ENCODE measurements at regions of chr19 and their contacts with region 1.

Region 1: GRCh38 chr19:662962-663681 is at the start of gene RNF126:
- DNase-seq: peak; percentile 88
- ATAC-seq: peak; percentile 89
- H3K4me3 ChIP-seq: peak within 1 kb of the TSS; percentile 87
- H3K27ac ChIP-seq: peak within 1 kb of the TSS; percentile 93
- H3K4me1 ChIP-seq: peaks cover 14% of the 10 kb centered on the region
- H3K27me3 ChIP-seq: no peaks in the 10 kb centered on the region
- CTCF ChIP-seq: no peak
- POLR2A ChIP-seq: peak; percentile 71; the same call in 1 of the 2 replicates
- RAD21 ChIP-seq: no peak
- total RNA-seq, gene RNF126: 7.0 and 8.6 TPM in 2 replicates

Region 2: DNA sequence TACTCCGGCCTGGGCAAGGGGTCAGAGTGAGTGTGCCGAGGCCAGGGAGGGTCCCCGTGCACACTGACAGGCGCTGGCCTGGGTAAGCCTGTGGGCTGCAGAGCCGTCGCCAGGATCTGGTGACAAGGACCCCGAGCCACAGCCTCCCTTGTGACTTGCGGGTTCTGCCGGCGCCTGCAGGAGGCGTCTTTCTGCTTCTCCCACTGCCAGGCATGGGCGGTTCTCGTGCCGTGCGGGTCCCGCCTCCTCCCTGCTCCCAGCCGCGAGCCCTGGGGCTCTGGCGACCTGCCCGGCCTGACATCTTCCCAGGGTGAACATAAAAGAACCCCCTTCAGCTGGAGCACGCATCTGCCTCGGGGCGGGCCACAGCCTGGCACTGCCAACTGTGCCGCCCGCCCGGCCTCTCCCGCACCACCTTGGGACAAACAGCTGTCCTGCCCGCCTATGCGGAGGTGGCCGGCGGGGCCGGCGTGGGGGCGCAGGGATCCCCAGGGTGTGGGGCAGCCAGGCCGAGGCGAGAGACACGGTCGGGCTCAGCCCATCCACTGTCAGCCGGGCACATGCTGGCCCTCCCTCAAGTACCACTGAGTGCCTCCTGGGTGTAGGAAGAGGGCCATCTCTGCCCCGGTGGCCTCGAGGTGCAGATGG is 74.9 kb before region 1 on chr19:
- CTCF ChIA-PET with region 1: no interaction called
- POLR2A ChIA-PET with region 1: no interaction called
- dilution Hi-C with region 1: no loop called
- in situ Hi-C with region 1: no loop called
- intact Hi-C with region 1: loop called (anchors 2 kb)
- DNase-seq: peak; percentile 72
- ATAC-seq: peak; percentile 61
- H3K4me3 ChIP-seq: no peak overlapping the region
- H3K27ac ChIP-seq: no peak overlapping the region
- H3K4me1 ChIP-seq: peaks cover 5% of the 10 kb centered on the region
- H3K27me3 ChIP-seq: peaks cover 16% of the 10 kb centered on the region
- CTCF ChIP-seq: peak; percentile 61
- POLR2A ChIP-seq: no peak
- RAD21 ChIP-seq: peak; percentile 47

Region 3: GRCh38 chr19:633068-633785 is 29.9 kb before region 1 on chr19 and contains the start of gene POLRMT:
- CTCF ChIA-PET with region 1: interaction called, 3 read pairs
- POLR2A ChIA-PET with region 1: no interaction called
- dilution Hi-C with region 1: no loop called
- in situ Hi-C with region 1: no loop called
- intact Hi-C with region 1: loop called (anchors 2 kb)
- DNase-seq: peak; percentile 98
- ATAC-seq: peak; percentile 96
- H3K4me3 ChIP-seq: peak within 1 kb of the TSS; percentile 66
- H3K27ac ChIP-seq: peak within 1 kb of the TSS; percentile 82
- H3K4me1 ChIP-seq: peaks cover 9% of the 10 kb centered on the region
- H3K27me3 ChIP-seq: no peaks in the 10 kb centered on the region
- CTCF ChIP-seq: 0 out of 2 replicates have a peak, but pooled peaks have one; percentile 19
- POLR2A ChIP-seq: peak; percentile 57
- RAD21 ChIP-seq: no peak
- total RNA-seq, gene POLRMT: 9.9 and 10.3 TPM in 2 replicates

Region 4: GRCh38 chr19:645641-646478 is 17.3 kb before region 1 on chr19:
- CTCF ChIA-PET with region 1: no interaction called
- POLR2A ChIA-PET with region 1: no interaction called
- dilution Hi-C with region 1: no loop called
- in situ Hi-C with region 1: no loop called
- intact Hi-C with region 1: no loop called
- DNase-seq: no peak
- ATAC-seq: no peak
- H3K4me3 ChIP-seq: no peak overlapping the region
- H3K27ac ChIP-seq: no peak overlapping the region
- H3K4me1 ChIP-seq: no peaks in the 10 kb centered on the region
- H3K27me3 ChIP-seq: no peaks in the 10 kb centered on the region
- CTCF ChIP-seq: no peak
- POLR2A ChIP-seq: no peak
- RAD21 ChIP-seq: no peak

Region 5: DNA sequence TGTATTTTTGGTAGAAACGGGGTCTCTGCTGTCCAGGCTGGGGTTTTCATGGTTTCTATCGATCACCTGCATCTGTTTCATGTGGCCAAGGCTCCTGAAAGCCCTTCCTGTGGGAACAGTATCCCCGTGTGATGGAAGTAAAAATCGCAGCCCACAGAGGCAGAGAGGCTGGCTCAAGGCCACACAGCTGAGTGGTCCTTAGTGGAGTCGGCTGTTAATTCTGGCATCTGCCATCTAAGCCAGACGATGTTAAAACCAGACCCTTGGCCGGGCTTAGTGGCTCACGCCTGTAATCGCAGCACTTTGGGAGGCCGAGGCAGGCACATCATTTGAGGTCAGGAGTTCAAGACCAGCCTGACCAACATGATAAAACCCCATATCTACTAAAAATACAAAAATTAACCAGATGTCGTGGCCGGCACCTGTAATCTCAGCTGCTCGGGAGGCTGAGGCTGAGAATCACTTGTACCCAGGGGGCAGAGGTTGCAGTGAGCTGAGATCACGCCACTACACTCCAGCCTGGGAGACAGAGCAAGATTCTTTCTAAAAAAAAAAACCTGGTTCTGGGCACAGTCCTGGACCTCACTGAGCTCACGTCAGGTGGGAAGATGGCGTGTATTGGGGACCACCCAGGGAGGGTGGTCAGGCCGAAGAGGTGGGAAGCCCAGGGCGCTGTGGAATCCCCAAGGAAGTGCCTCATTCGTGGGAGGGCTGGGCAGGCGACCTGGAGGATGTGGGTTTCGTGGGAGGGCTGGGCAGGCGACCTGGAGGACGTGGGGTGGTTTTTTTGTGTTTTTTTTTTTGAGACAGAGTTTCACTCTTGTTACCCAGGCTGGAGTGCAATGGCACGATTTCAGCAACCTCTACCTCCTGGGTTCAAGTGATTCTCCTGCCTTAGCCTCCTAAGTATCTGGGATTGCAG is 69.3 kb after region 1 on chr19:
- CTCF ChIA-PET with region 1: no interaction called
- POLR2A ChIA-PET with region 1: no interaction called
- dilution Hi-C with region 1: no loop called
- in situ Hi-C with region 1: loop called (anchors 5 kb)
- intact Hi-C with region 1: loop called (anchors 1 kb)
- DNase-seq: no peak
- ATAC-seq: no peak
- H3K4me3 ChIP-seq: no peak overlapping the region
- H3K27ac ChIP-seq: no peak overlapping the region
- H3K4me1 ChIP-seq: no peaks in the 10 kb centered on the region
- H3K27me3 ChIP-seq: no peaks in the 10 kb centered on the region
- CTCF ChIP-seq: no peak
- POLR2A ChIP-seq: no peak
- RAD21 ChIP-seq: no peak

Region 6: DNA sequence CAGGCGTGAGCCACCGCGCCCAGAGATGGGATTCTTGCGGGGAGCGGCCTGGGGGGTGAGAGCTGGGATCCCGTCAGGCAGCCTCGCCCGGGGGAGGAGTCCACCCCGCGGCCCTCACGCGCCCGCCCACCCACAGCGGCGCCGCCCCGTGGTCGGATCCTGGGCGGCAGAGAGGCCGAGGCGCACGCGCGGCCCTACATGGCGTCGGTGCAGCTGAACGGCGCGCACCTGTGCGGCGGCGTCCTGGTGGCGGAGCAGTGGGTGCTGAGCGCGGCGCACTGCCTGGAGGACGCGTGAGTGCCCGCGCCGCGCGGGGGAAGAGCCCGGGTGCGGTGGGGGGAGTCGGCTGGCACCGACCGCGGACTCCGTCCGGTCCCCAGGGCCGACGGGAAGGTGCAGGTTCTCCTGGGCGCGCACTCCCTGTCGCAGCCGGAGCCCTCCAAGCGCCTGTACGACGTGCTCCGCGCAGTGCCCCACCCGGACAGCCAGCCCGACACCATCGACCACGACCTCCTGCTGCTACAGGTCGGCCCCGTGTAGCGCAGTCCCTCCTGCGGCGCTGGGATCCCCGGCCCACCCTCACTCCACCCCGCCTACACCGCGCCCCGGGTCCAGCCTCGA is 197.5 kb after region 1 on chr19:
- CTCF ChIA-PET with region 1: no interaction called
- POLR2A ChIA-PET with region 1: no interaction called
- dilution Hi-C with region 1: no loop called
- in situ Hi-C with region 1: no loop called
- intact Hi-C with region 1: loop called (anchors 10 kb)
- DNase-seq: peak; percentile 75
- ATAC-seq: peak; percentile 82
- H3K4me3 ChIP-seq: peak overlapping the region; percentile 59
- H3K27ac ChIP-seq: no peak overlapping the region
- H3K4me1 ChIP-seq: peaks cover 3% of the 10 kb centered on the region; the same call in 1 of the 2 replicates
- H3K27me3 ChIP-seq: no peaks in the 10 kb centered on the region
- CTCF ChIP-seq: peak; percentile 21; the same call in 1 of the 2 replicates
- POLR2A ChIP-seq: no peak
- RAD21 ChIP-seq: no peak

Region 7: DNA sequence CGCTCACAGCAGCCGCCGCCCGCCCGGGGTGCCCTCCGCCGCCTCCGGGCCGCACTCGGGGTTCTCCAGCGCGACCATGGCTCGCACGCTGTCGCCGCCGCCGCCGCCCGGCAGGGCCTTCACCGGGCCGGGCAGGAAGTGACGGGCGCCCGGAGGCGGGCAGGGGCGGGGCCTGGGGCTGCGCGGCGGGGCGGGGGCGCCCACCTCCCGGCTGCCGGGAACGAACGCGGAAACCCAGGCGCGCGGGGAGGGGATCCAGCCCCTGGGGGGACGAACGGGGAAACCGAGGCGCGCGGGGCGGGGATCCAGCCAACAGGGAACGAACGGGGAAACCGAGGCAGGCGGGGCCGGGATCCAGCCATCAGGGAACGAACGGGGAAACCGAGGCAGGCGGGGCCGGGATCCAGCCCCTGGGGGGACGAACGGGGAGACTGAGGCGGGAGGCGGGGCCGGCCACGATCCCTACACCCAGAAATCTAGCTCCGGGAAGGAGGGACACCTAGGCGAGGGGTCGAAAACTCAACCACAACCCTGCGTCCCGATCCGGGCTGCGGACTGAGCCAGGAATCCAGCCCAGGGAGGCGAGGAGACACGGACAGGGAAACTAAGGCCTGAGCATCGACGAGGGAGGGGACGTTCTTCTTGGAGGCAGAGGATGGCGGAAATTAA is 250.1 kb after region 1 on chr19 and contains the start of gene R3HDM4:
- CTCF ChIA-PET with region 1: no interaction called
- POLR2A ChIA-PET with region 1: no interaction called
- dilution Hi-C with region 1: no loop called
- in situ Hi-C with region 1: no loop called
- intact Hi-C with region 1: loop called (anchors 5 kb)
- DNase-seq: peak; percentile 37
- ATAC-seq: peak; percentile 93
- H3K4me3 ChIP-seq: peak within 1 kb of the TSS; percentile 100
- H3K27ac ChIP-seq: peak within 1 kb of the TSS; percentile 98
- H3K4me1 ChIP-seq: peaks cover 12% of the 10 kb centered on the region
- H3K27me3 ChIP-seq: peaks cover 12% of the 10 kb centered on the region
- CTCF ChIP-seq: no peak
- POLR2A ChIP-seq: peak; percentile 82
- RAD21 ChIP-seq: no peak
- total RNA-seq, gene R3HDM4: 8.9 and 9.0 TPM in 2 replicates

Region 8: DNA sequence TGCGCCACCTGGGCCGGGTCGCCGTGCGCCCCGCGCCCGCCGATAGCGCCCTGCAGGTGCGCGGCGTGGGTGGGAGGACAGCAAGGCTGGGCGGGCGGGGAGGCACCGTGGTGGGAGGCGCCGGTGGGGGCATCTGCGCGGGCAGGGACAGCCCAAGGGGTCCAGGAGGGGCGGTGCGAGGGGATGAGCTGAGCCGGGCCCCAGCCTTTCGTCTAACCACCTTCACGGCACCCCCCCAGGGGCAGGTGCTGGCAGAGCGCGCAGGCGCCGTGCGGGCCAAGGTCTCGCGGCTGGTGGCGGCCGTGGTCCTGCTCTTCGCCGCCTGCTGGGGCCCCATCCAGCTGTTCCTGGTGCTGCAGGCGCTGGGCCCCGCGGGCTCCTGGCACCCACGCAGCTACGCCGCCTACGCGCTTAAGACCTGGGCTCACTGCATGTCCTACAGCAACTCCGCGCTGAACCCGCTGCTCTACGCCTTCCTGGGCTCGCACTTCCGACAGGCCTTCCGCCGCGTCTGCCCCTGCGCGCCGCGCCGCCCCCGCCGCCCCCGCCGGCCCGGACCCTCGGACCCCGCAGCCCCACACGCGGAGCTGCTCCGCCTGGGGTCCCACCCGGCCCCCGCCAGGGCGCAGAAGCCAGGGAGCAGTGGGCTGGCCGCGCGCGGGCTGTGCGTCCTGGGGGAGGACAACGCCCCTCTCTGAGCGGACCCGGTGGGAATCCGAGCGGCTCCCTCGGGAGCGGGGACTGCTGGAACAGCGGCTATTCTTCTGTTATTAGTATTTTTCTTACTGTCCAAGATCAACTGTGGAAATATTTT is 257.1 kb after region 1 on chr19:
- CTCF ChIA-PET with region 1: no interaction called
- POLR2A ChIA-PET with region 1: no interaction called
- dilution Hi-C with region 1: no loop called
- in situ Hi-C with region 1: no loop called
- intact Hi-C with region 1: loop called (anchors 2 kb)
- DNase-seq: no peak
- ATAC-seq: 0 out of 2 replicates have a peak, but pooled peaks have one; percentile 1
- H3K4me3 ChIP-seq: no peak overlapping the region
- H3K27ac ChIP-seq: no peak overlapping the region
- H3K4me1 ChIP-seq: peaks cover 6% of the 10 kb centered on the region
- H3K27me3 ChIP-seq: peaks cover 38% of the 10 kb centered on the region
- CTCF ChIP-seq: no peak
- POLR2A ChIP-seq: no peak
- RAD21 ChIP-seq: no peak

Measured in IMR-90 (cell line).